AG04449 (cell line): ENCODE measurements at regions of chr16 and their contacts with region 1.

Region 1: DNA sequence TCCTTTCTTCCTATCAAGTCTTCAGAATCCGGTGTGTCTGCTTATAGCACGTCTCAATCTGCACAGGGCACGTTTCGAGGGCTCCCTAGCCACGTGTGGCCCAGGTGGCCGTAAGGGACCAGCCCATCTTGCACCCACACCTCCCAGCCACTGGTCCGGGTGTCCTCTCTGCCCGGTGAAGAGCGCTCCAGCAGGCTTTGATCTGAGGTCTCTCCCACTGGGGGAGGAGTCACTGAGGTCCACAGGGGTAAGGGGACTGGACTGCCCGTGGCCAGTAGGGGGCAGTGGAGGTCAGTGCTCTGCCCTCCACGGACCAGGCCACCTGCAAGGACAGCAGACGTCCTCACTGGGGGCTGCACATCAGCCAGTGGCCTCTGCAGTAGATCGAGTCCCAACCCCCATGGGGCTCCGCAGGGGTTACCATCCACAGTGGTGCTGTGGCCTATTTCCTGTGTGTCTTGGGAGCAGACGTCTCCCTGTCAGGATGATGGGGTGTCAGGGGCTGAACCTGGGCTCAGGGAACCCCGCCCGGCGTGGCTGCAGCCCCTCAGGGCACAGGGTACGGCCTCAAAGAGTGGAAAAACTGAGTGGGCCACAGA is 204.1 kb upstream of the CIBAR2 start:
- DNase-seq: no peak
- H3K4me3 ChIP-seq: no peak overlapping the region
- CTCF ChIP-seq: peak; percentile 95

Region 2: DNA sequence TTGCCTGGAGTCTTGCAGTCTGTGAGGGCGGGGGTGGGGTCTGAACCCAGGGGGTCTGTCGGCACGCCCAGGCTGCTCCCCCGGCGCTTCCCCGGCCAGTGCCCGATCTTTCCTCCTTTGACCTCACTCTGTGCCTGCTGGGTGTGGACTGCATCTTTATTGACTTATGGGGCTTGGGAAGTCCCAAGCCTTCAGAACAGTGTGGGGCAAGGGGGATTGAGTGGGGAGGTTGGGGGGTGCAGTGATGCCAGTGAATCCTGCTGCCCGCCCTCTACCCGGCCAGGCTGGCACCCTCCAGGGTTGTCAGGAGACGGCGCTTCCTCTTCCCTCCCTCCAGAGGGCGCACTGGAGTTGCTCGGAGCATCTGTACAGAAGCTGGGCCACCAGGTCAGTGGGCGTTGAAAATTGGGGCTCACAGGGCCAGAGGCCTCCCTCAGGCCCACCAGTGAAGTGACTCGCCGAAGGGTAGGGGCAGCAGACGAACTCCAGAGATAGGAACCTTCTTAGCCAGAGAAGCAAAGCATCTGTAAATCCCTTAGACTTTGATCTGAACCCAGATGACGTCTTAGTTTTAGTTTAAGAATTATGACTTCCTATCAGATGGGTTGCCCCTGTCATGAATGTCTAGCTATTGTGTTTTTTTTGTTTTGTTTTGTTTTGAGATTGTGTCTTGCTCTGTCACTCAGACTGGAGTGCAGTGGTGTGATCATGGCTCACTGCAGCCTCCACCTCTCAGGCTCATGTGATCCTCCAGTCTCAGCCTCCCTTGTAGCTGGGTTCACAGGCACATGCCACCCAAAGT is 19.4 kb before region 1 on chr16:
- CTCF ChIA-PET with region 1: interaction called, 12 read pairs
- POLR2A ChIA-PET with region 1: no interaction called
- DNase-seq: no peak
- H3K4me3 ChIP-seq: no peak overlapping the region
- CTCF ChIP-seq: peak; percentile 88

Region 3: DNA sequence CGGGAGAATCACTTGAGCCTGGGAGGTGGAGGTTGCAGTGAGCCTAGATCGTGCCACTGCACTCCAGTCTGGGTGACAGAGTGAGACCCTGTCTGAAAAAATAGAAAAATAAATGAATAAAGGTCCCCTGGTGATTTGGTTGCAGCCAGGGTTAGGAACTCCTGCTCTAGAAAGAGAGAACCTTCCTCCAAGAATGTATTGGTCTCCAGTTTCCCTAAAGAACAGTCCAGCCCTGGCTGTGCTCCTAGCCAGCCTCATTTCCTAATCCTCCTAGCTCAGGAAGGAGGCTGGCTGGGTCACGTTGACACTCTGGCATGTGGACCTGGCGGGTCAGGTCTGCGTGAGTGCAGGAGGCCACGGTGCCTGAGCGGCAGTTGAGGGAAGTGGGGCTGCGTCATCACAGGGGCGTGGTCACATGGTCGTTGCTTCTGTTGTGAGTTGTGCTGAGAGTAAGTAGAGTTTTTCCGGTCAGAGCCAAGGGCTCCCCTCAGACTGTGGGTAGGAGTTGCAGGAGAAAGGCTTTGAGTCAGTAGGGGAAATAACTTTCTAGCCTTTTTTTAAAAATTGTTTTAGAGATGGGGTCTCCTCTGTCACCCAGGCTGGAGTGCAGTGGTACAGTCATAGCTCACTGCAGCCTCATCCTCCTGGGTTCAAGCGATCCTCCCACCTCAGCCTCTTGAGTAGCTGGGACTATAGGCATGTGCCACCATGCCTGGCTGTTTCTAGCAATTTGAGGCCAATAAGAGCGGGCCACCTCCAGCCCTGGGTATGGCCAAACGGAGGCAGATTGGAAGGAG is 10.2 kb before region 1 on chr16:
- CTCF ChIA-PET with region 1: interaction called, 15 read pairs
- POLR2A ChIA-PET with region 1: interaction called, 3 read pairs
- DNase-seq: no peak
- H3K4me3 ChIP-seq: no peak overlapping the region
- CTCF ChIP-seq: no peak